HepG2 (cell line): ENCODE measurements at regions of chr11 and their contacts with region 1.

Region 1: GRCh38 chr11:62794201-62794775 is 2.5 kb upstream of the TMEM223 start:
- DNase-seq: no peak
- ATAC-seq: no peak
- H3K4me3 ChIP-seq: no peak overlapping the region
- H3K27ac ChIP-seq: no peak overlapping the region
- H3K4me1 ChIP-seq: peaks cover 29% of the 10 kb centered on the region
- H3K27me3 ChIP-seq: no peaks in the 10 kb centered on the region
- CTCF ChIP-seq: no peak
- EP300 ChIP-seq: no peak
- POLR2A ChIP-seq: no peak
- RAD21 ChIP-seq: no peak

Region 2: GRCh38 chr11:62805076-62805892 is 11.0 kb after region 1 on chr11 and contains the start of gene NXF1:
- CTCF ChIA-PET with region 1: no interaction called
- POLR2A ChIA-PET with region 1: interaction called, 12 read pairs
- in situ Hi-C with region 1: no loop called
- intact Hi-C with region 1: no loop called
- DNase-seq: peak; percentile 85
- ATAC-seq: peak; percentile 85
- H3K4me3 ChIP-seq: peak within 1 kb of the TSS; percentile 86 to 97 (median 92)
- H3K27ac ChIP-seq: peak within 1 kb of the TSS; percentile 58
- H3K4me1 ChIP-seq: peaks cover 23% of the 10 kb centered on the region
- H3K27me3 ChIP-seq: no peaks in the 10 kb centered on the region; a peak in 1 of 5 replicates
- CTCF ChIP-seq: no peak; the same call in 1 of the 2 replicates
- EP300 ChIP-seq: no peak
- POLR2A ChIP-seq: peak; percentile 100
- RAD21 ChIP-seq: peak; percentile 66; the same call in 1 of the 2 replicates
- total RNA-seq, gene NXF1: 26.2 and 30.9 TPM in 2 replicates

Region 3: GRCh38 chr11:62823677-62824076 is 29.4 kb after region 1 on chr11:
- CTCF ChIA-PET with region 1: no interaction called
- POLR2A ChIA-PET with region 1: no interaction called
- in situ Hi-C with region 1: no loop called
- intact Hi-C with region 1: no loop called
- DNase-seq: no peak
- ATAC-seq: no peak
- H3K4me3 ChIP-seq: no peak overlapping the region
- H3K27ac ChIP-seq: no peak overlapping the region
- H3K4me1 ChIP-seq: no peaks in the 10 kb centered on the region
- H3K27me3 ChIP-seq: no peaks in the 10 kb centered on the region
- CTCF ChIP-seq: no peak
- EP300 ChIP-seq: no peak
- POLR2A ChIP-seq: no peak
- RAD21 ChIP-seq: no peak